GM13976 (cell line): ENCODE measurements at regions of chr17 and their contacts with region 1.

Region 1: DNA sequence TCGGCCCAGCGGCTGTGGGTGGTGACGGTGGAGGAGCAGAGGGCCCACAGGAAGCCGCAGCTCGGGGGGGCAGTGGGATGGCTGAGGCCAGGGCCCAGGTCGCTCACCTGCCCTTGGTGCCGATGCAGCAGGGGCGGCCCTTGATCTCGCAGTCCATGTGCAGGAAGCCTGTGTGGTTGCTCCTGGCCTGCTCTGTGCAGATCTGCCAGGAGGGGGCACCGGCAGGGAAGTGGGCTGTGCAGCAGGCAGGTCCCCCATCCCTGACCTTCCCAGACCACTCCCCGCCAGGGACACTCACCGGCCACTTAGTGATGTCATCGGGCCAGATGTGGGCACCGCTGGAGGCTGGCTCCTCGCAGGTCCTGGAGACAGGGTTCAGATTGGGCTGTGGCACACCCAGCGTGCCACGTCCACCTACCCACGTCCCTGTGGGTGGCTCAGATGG is 6.2 kb downstream of the AANAT start:
- DNase-seq: no peak
- CTCF ChIP-seq: no peak

Region 2: DNA sequence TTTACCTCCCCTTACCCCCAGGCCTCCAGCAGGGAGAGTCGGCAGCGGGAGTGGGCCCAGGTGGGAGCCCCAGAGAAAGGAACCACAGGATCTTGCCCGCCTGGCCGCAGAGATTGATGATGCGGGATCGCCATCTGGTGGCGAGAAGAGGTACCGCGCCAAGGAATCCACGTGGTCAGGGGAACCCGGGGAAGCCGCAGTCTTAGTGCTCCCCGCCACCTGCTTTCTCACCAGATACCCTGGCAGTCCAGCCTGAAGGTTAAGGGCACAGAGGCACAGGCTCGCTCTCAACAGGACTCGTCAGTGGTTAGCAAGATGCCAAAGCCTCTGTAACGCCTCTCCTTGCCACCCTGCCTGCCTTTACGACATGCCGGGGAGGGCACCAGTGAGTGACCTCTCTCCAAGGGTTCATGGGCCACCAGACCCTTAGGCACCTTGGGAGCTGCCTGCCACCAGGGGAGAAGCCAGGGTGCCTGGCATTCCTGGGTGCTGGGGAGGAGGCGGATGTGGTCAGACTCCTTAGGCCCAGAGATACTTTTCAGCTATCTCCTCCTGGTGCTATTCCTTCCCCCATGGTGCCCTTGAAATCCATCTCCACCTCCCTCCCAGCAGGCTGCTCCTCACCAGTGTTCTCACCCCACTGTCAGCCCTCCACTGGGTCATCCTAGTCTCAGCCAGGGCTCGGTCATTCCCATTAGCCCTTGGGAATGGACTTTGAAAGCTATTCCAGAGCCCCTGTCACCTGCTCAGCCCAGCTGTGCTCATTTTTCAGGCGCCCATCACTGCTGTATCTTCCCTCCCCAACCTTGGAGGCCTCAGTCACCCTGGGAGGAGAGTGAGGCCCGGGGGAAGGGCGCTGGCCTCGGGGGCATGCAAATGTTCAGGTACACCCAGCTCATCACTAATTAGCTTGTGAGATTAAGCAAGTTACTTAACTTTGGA is 33.1 kb after region 1 on chr17:
- in situ Hi-C with region 1: loop called (anchors 5 kb)
- DNase-seq: peak; percentile 90
- CTCF ChIP-seq: peak; percentile 90

Region 3: GRCh38 chr17:76530095-76530718 is 56.6 kb after region 1 on chr17:
- in situ Hi-C with region 1: no loop called
- DNase-seq: no peak
- CTCF ChIP-seq: no peak

Region 4: GRCh38 chr17:76623271-76624146 is 149.9 kb after region 1 on chr17:
- in situ Hi-C with region 1: no loop called
- DNase-seq: peak; percentile 87
- CTCF ChIP-seq: peak; percentile 98